PC-3 (cell line): ENCODE measurements at regions of chr14 and their contacts with region 1.

Region 1: GRCh38 chr14:52327374-52328226 is 13.5 kb downstream of the PTGER2 start:
- DNase-seq: peak; percentile 70
- ATAC-seq: peak; percentile 61
- H3K4me3 ChIP-seq: peak overlapping the region; percentile 4; the same call in 1 of the 2 replicates
- H3K27ac ChIP-seq: peak overlapping the region; percentile 93
- H3K4me1 ChIP-seq: peaks cover 33% of the 10 kb centered on the region
- H3K27me3 ChIP-seq: no peaks in the 10 kb centered on the region
- CTCF ChIP-seq: no peak

Region 2: DNA sequence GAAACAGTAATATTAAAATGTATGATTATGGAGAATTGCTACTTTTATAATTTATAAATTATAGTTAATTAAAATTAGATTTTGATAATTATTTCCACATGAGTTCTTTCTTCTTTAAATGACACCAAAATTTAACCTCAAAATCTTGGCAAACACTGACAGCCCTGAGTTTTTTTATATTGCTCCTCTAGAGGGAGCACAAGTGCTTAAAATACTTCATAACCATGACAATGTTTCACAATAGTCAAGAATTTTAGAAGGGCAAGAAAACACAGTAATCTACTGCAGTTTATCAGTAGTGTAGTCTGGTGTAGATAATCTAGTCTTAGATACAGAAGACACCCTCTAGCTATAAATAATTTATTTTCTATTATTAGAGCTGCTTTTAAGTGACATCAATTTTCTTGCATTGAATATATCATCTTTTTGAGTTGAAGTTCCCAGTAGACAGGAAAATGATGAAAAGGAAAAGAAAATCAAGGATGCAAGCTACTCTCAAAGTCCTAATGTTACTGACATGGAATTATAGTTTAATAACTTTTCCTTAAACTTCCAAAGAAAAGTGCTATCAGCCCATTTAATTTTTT is 27.8 kb before region 1 on chr14:
- CTCF ChIA-PET with region 1: no interaction called
- POLR2A ChIA-PET with region 1: no interaction called
- intact Hi-C with region 1: loop called (anchors 2 kb)
- DNase-seq: peak; percentile 80
- ATAC-seq: peak; percentile 72
- H3K4me3 ChIP-seq: no peak overlapping the region
- H3K27ac ChIP-seq: no peak overlapping the region
- H3K4me1 ChIP-seq: no peaks in the 10 kb centered on the region
- H3K27me3 ChIP-seq: no peaks in the 10 kb centered on the region
- CTCF ChIP-seq: peak; percentile 83

Region 3: DNA sequence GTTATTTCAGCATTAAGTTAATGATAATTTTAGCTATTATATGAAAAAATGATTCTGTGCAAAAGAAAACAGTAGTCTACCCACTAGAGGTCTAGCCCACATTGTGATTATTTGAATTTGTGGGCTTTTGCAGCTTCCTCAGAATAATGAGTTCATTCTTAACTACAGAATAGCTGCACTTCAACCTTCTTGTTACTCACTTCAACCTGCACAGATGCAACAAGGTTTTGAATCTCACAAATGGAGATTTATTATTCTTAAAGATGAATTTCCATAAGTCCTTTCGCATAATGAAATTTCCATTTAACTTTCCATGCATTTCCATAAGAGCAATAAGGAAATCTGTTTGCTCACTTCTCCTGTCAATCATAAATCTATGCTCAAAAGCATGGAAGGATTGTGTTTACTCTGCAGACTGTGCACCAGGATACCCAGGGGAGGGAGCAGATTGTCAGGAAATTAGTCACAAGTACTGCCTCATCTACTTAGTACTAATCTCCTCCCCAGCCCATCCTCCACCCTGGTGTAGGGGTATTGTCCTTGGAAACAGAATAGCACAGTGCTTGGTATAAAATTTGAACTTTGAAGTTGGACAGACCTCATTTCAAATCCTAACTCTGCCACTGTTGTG is 10.6 kb after region 1 on chr14:
- CTCF ChIA-PET with region 1: no interaction called
- POLR2A ChIA-PET with region 1: no interaction called
- intact Hi-C with region 1: loop called (anchors 1 kb)
- DNase-seq: peak; percentile 95
- ATAC-seq: peak; percentile 100
- H3K4me3 ChIP-seq: no peak overlapping the region
- H3K27ac ChIP-seq: peak overlapping the region; percentile 43
- H3K4me1 ChIP-seq: peaks cover 33% of the 10 kb centered on the region
- H3K27me3 ChIP-seq: no peaks in the 10 kb centered on the region
- CTCF ChIP-seq: no peak

Region 4: DNA sequence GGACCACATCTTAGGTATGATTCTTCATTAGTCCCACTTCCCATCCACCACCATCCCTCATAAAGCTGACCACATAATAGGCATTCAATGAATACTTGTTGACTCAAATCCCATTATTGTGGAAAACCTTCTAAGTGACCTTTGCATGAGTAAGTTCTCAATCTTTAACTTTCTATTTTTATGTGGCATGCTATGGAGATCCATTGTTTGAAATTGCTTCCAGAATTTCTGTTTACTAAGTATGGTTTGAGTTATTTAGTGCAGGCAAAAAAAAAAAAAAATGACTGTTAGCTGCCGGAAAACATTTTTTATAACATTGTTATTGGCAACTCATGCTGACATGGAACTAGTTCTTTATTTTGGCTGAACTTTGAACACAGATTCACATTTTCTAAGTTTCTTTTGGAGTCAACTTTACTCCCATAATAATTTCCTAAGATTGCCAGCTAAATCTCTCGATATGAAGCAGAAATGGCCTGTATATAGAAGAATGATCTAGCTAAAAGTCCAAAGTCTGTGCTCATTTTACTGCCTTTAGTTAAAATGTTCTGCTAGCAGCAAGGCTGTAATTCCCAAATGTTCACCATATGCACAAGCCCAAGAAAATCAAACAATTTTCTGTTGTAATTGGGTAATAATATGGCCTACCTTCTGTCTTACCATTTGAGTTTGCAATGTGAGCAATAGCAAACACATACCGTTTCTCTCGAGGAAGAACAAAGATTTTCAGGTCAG is 64.4 kb after region 1 on chr14:
- CTCF ChIA-PET with region 1: no interaction called
- POLR2A ChIA-PET with region 1: no interaction called
- intact Hi-C with region 1: loop called (anchors 1 kb)
- DNase-seq: peak; percentile 98
- ATAC-seq: peak; percentile 91
- H3K4me3 ChIP-seq: peak overlapping the region; percentile 26; the same call in 1 of the 2 replicates
- H3K27ac ChIP-seq: peak overlapping the region; percentile 77
- H3K4me1 ChIP-seq: peaks cover 24% of the 10 kb centered on the region
- H3K27me3 ChIP-seq: no peaks in the 10 kb centered on the region
- CTCF ChIP-seq: no peak

Region 5: GRCh38 chr14:52413729-52414408 is 86.3 kb after region 1 on chr14:
- CTCF ChIA-PET with region 1: no interaction called
- POLR2A ChIA-PET with region 1: no interaction called
- intact Hi-C with region 1: loop called (anchors 1 kb)
- DNase-seq: peak; percentile 85
- ATAC-seq: peak; percentile 94
- H3K4me3 ChIP-seq: peak overlapping the region; percentile 29; the same call in 1 of the 2 replicates
- H3K27ac ChIP-seq: peak overlapping the region; percentile 10; the same call in 1 of the 2 replicates
- H3K4me1 ChIP-seq: peaks cover 9% of the 10 kb centered on the region
- H3K27me3 ChIP-seq: no peaks in the 10 kb centered on the region
- CTCF ChIP-seq: no peak

Region 6: DNA sequence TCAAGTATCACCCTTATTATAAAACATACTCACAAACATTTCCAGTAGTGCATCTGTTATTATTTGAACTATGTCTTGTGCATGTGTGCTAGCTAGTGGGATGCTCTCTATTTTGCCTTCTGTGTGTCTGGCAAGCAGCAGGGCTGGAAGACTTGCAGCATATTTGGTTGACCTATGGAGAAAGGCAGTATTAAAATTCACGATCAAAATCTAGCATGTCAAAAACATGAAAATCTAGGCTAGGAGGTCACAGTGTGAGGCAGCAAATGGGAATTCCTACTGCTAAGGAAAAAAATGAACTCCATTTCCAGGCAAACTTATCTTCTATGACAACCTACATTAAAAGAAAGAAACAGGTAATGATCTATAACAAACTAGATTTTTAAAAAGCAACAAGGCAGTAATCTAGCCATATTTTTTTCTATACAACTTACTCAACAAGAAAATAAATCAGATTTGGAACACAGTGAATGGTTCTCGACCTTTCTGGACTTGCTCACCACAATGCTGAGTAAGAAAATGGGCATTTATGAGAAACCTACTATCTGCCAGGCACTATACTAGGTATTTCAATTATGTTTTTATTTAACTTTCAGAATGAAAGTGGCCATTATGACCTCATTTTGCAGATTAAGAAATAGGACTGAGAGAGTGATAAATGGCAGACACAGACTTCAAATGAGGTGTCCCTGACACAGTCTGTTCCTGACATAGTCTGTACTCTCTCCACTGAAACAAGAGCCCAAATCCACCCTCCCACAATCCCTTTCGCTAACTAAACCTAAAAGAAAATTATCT is 127.9 kb after region 1 on chr14:
- CTCF ChIA-PET with region 1: no interaction called
- POLR2A ChIA-PET with region 1: no interaction called
- intact Hi-C with region 1: loop called (anchors 1 kb)
- DNase-seq: peak; percentile 70
- ATAC-seq: no peak
- H3K4me3 ChIP-seq: no peak overlapping the region
- H3K27ac ChIP-seq: peak overlapping the region; percentile 4; the same call in 1 of the 2 replicates
- H3K4me1 ChIP-seq: peaks cover 40% of the 10 kb centered on the region
- H3K27me3 ChIP-seq: no peaks in the 10 kb centered on the region
- CTCF ChIP-seq: no peak